Heart left ventricle (tissue), 16 donors: ENCODE measurements at regions of chr4 and their contacts with region 1.

Region 1: DNA sequence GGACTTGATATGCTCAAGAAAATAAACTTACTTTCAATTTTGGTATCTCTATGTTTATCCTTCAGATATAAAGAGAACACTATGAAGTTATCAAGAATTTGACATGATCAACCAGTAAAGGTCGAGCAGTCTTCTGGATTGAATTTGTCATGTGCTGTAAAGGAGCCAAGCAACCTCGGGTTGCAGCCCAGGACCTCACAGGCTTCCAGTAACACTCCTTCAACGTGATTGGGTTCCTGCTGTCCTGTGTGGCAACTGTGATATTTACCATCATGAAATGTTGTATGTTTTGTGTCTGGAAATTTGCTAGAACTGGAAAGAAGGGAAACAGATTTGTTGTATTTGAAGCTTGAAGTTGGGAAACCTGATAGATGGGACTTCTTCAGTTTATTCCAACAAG is 52.0 kb upstream of the UGT2B7 start:
- DNase-seq: no peak
- ATAC-seq: no peak
- H3K4me3 ChIP-seq: no peak overlapping the region
- H3K27ac ChIP-seq: no peak overlapping the region
- H3K4me1 ChIP-seq: no peaks in the 10 kb centered on the region
- H3K27me3 ChIP-seq: no peaks in the 10 kb centered on the region
- CTCF ChIP-seq: no peak
- POLR2A ChIP-seq: no peak

Region 2: DNA sequence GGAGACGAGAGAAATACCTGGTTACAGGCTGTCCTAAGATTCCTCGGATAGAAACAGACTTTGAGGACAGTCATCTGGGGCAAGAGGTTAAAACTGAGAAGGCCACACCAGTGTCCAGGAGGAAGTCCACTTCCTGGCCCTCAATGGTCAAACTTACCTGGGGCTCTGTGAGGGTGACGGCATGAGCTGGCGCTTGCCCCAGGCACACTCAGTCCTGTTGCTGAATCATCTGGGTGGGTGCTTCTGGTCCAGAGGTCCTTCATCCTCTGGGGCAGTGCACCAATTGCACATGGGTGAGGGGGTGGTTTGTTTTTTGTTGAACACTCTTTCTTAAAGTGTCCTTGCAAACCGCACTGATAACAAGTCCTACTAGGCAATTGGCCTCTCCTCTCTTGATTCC is 177.4 kb after region 1 on chr4:
- intact Hi-C with region 1: no loop called
- DNase-seq: no peak
- ATAC-seq: no peak
- H3K4me3 ChIP-seq: no peak overlapping the region
- H3K27ac ChIP-seq: no peak overlapping the region
- H3K4me1 ChIP-seq: no peaks in the 10 kb centered on the region
- H3K27me3 ChIP-seq: no peaks in the 10 kb centered on the region
- CTCF ChIP-seq: no peak
- POLR2A ChIP-seq: no peak

Region 3: GRCh38 chr4:69639542-69639941 is 595.3 kb after region 1 on chr4 and contains the start of gene UGT2A2:
- intact Hi-C with region 1: loop called in 1 of 10 experiments (anchors 10 kb)
- DNase-seq: no peak
- ATAC-seq: no peak
- H3K4me3 ChIP-seq: no peak within 1 kb of the TSS
- H3K27ac ChIP-seq: no peak within 1 kb of the TSS
- H3K4me1 ChIP-seq: no peaks in the 10 kb centered on the region
- H3K27me3 ChIP-seq: no peaks in the 10 kb centered on the region
- CTCF ChIP-seq: no peak
- POLR2A ChIP-seq: no peak
- total RNA-seq, gene UGT2A2: not detected